Aorta (tissue), 5 donors: ENCODE measurements at regions of chr16 and their contacts with region 1.

Region 1: GRCh38 chr16:53892155-53892554 is 188.2 kb downstream of the FTO start:
- DNase-seq: no peak
- ATAC-seq: peak; percentile 67
- H3K4me3 ChIP-seq: no peak overlapping the region
- H3K27ac ChIP-seq: no peak overlapping the region
- H3K4me1 ChIP-seq: no peaks in the 10 kb centered on the region
- H3K27me3 ChIP-seq: no peaks in the 10 kb centered on the region

Region 2: DNA sequence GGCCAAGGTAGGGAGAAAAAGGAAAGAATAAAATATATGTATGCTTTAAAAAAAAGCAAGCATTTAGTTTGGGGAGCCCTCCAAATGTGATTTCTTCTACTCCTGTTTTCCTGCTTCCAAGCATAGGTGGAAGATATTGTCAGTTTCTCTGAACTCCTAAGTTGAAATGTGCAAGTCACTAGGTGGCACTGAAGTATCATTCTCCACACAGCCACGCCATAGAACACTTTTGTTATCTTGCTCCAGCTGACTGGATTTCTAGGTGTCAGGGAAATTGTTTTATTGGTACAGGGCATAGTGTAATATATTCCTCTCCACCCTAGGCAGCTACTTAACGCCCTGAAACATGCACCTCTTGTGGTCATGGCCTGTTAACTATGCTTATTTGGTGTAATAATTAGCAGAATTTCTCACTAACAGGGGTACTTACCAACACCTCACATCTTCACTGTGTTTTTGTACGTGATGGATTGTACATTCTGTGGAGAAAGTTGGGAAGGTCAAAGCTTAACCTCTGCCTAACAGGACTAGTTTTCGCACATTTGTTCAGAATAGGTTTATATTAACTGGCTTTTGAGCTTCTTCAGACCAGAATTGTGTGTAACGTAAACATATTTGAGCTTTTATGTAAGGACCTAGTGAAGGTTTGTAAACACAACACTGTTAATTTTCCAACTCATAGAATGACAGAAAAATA is 118.9 kb before region 1 on chr16:
- intact Hi-C with region 1: loop called in 1 of 2 experiments (anchors 10 kb)
- DNase-seq: no peak
- ATAC-seq: peak; percentile 68
- H3K4me3 ChIP-seq: no peak overlapping the region
- H3K27ac ChIP-seq: no peak overlapping the region
- H3K4me1 ChIP-seq: peaks cover 5 to 20% of the 10 kb centered on the region in 2 donors
- H3K27me3 ChIP-seq: no peaks in the 10 kb centered on the region